Posterior vena cava (tissue), 2 donors: ENCODE measurements at regions of chr18 and their contacts with region 1.

Region 1: GRCh38 chr18:4405965-4406364 is 49.1 kb downstream of the DLGAP1 start:
- DNase-seq: no peak

Region 2: DNA sequence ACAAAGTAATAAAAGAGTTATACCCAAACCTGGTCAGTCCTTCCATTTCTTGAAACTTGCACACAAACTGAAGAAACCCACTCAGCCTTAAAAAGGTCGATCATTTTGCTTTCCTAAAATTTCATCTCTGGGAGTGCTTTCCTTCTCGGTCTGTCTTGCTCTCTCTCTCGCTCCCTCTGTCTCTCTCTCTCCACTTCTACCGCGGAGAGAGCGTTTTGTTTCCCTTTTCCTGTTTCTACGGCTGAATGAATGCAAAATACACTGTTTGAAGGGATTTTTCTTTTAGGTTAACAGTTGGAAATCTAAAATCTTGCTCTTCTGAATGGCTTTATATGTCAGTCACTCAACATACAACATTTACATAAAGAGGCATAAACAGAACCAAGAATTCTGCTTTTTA is 531.8 kb before region 1 on chr18:
- intact Hi-C with region 1: no loop called
- DNase-seq: no peak

Region 3: DNA sequence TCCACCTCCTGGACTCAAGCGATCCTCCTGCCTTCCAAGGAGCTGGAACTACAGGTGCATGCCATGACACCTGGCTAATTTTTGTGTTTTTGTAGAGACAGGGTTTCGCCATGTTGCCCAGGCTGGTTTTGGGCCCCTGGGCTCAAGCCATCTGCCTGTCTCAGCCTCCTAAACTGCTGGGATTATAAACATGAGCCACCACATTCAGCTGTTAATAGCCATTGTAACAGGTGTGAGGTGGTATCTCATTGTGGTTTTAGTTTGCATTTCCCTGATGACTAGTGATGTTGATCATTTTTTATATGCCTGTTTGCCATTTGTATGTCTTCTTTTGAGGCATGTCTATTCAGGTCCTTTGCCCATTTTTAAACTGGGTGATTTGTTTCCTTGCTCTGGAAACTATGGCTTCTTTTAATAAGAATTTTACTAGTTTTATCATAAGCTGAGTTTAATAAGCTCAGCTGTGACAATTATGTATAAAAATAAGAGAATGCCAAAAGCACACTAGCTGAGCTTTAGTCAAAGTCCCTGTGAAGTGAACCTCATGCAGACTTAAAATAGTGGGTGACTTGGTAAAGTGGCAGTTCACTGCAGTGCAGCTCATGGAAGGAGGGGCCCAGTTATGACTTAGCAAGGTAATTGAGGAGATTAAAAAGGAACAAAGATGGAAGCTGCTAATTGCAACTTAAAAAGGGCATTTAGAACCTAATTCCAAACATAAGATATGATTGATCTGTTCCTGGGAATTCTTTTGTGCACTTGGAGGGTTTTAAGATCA is 490.9 kb before region 1 on chr18:
- intact Hi-C with region 1: loop called in 1 of 2 experiments (anchors 5 kb)
- DNase-seq: no peak

Region 4: GRCh38 chr18:4369705-4370104 is 36.3 kb before region 1 on chr18:
- intact Hi-C with region 1: no loop called
- DNase-seq: no peak

Region 5: DNA sequence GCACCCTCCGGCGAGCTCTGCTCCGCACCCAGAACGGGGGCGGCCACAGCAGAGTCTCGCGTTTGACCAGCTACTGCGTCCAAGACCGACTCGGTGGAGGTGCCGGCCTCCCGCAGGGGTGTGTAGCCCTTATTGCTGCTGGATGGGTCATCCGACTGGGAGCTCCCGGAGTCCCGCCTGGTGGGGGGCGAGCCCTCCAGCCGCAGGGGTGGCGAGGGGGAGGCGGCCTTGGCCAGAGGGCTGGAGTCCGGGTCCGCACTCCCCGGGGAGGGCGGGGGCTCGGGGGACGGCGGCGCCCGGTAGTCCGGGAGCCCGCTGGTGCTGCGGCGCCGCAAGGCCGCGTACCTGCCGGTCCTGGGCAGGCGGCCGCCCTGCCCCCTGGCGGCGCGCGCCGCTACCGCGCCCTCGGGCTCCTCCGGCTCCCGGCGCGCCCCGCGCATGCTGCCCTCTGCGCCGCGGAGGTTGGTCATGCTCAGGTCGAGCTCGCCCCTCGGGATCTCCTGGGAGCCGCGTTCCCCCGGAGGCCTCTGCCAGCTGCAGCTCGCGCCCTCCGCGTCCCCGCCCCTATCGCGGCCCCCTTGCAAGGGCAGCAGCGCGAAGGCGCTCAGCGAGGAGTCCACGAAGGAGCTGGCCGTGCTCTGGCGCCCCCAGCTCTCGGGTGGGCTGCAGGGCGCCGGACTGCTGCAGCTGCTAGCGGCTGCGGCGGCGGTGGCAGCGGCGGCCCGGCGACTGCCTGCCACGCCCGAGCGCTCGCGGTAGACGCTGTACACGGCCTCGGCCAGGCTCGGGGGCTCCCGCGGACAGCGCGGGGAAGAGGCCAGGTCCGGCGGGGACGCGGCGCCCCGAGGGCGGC is 1484.6 kb after region 1 on chr18:
- intact Hi-C with region 1: no loop called
- DNase-seq: peak; percentile 81